Vagina (tissue), 2 donors: ENCODE measurements at regions of chr15 and their contacts with region 1.

Region 1: GRCh38 chr15:23857028-23857641 is 170.0 kb upstream of the NDN start:
- DNase-seq: no peak
- H3K4me3 ChIP-seq: no peak overlapping the region
- H3K27ac ChIP-seq: no peak overlapping the region
- H3K4me1 ChIP-seq: no peaks in the 10 kb centered on the region
- H3K27me3 ChIP-seq: no peaks in the 10 kb centered on the region
- CTCF ChIP-seq: peak in 2 of 3 experiments; percentile 28 to 57
- POLR2A ChIP-seq: no peak

Region 2: GRCh38 chr15:23648920-23649515 is 208.1 kb before region 1 on chr15:
- intact Hi-C with region 1: loop called (anchors 5 kb)
- DNase-seq: no peak
- H3K4me3 ChIP-seq: no peak overlapping the region
- H3K27ac ChIP-seq: no peak overlapping the region
- H3K4me1 ChIP-seq: no peaks in the 10 kb centered on the region
- H3K27me3 ChIP-seq: no peaks in the 10 kb centered on the region
- CTCF ChIP-seq: peak; percentile 12 to 35 (median 20)
- POLR2A ChIP-seq: no peak

Region 3: DNA sequence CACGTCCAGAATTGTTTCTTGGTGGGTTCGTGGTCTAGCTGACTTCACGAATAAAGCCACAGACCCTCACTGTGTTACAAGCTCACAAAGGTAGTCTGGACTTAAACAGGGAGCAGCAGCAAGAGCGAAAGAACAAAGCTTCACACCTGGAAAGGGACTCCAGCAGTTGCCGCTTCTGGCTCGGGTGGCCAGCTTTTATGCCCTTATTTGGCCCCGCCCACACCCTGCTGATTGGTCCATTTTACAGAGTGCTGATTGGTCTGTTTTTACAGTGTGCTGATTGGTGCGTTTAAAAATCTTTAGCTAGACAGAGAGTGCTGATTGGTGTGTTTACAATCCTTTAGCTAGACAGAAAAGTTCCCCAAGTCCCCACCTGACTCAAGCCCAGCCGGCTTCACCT is 24.2 kb after region 1 on chr15:
- intact Hi-C with region 1: no loop called
- DNase-seq: no peak
- H3K4me3 ChIP-seq: no peak overlapping the region
- H3K27ac ChIP-seq: no peak overlapping the region
- H3K4me1 ChIP-seq: no peaks in the 10 kb centered on the region
- H3K27me3 ChIP-seq: no peaks in the 10 kb centered on the region
- CTCF ChIP-seq: no peak
- POLR2A ChIP-seq: no peak